ENCODE measurements at regions of chr3 and their contacts with region 1.

Region 1: GRCh38 chr3:141505166-141505565 is 18.3 kb downstream of the RASA2 start:
- DNase-seq: no peak
- ATAC-seq: no peak
- H3K4me3 ChIP-seq: no peak overlapping the region
- H3K27ac ChIP-seq: no peak overlapping the region
- H3K4me1 ChIP-seq: peaks cover 0 to 29% (median 2%) of the 10 kb centered on the region in 12 donors
- H3K27me3 ChIP-seq: no peaks in the 10 kb centered on the region
- CTCF ChIP-seq: no peak
- POLR2A ChIP-seq: no peak

Region 2: DNA sequence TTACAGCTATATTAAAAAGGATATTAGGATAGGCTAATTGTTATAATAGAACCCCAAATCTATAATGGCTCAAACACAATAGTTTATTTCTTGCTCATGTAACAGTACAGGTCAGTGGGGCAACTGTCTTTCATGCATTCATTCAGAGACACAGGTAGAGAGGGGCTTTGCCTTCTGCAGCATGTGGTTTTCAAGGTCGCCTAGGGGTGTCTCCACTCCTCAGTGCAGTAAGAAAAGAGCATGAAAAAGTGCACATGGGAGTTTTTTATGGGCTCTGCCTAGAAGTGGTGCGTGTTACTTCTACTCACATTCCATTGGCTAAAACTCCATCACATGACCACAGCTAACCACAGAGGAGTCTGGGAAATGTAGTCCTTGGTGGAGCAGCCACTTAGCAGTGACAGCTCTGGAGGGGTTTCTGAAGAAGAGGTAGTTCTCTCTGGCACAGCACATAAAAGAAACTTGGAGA is 135.1 kb before region 1 on chr3:
- intact Hi-C with region 1: no loop called
- DNase-seq: peak in 4 of 5 donors; percentile 31 to 71 (median 52)
- ATAC-seq: peak; percentile 58 to 72 (median 67)
- H3K4me3 ChIP-seq: peak overlapping the region in 9 of 12 donors; percentile 2 to 54 (median 45)
- H3K27ac ChIP-seq: peak overlapping the region; percentile 31 to 97 (median 94)
- H3K4me1 ChIP-seq: peaks cover 12 to 65% (median 42%) of the 10 kb centered on the region in 12 donors
- H3K27me3 ChIP-seq: no peaks in the 10 kb centered on the region
- CTCF ChIP-seq: peak in 9 of 12 donors; percentile 24 to 61 (median 29)
- POLR2A ChIP-seq: peak in 1 of 2 donors; percentile 13

Region 3: GRCh38 chr3:141529256-141530132 is 24.3 kb after region 1 on chr3:
- intact Hi-C with region 1: loop called in 1 of 10 experiments (anchors 2 kb)
- DNase-seq: no peak
- ATAC-seq: no peak
- H3K4me3 ChIP-seq: peak overlapping the region in 1 of 12 donors; percentile 17
- H3K27ac ChIP-seq: peak overlapping the region in 11 of 12 donors; percentile 12 to 86 (median 43)
- H3K4me1 ChIP-seq: peaks cover 0 to 61% (median 16%) of the 10 kb centered on the region in 12 donors
- H3K27me3 ChIP-seq: no peaks in the 10 kb centered on the region
- CTCF ChIP-seq: no peak
- POLR2A ChIP-seq: no peak

Region 4: DNA sequence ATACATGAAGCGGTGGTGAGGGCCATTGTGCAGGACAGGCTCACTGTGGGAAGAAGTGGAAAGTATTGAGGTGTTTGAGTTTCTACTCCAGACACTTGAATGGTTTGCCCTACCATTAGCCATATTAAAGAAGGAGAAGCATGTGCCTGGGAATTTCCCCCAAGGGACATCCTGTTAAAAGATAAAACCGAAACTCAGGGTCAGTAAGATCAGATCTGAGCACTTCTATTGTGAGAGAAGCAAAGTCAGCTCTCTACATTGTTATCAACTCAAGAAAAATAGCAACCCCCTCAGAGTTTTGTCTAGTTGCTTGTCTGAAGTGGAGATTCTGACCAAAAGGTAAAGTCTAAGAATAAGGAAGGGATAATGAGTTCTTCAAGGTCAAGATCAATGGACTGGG is 1884.2 kb after region 1 on chr3:
- intact Hi-C with region 1: no loop called
- DNase-seq: no peak
- ATAC-seq: no peak
- H3K4me3 ChIP-seq: no peak overlapping the region
- H3K27ac ChIP-seq: no peak overlapping the region
- H3K4me1 ChIP-seq: no peaks in the 10 kb centered on the region
- H3K27me3 ChIP-seq: no peaks in the 10 kb centered on the region
- CTCF ChIP-seq: no peak
- POLR2A ChIP-seq: no peak

Measured in heart left ventricle (tissue), 16 donors.